Dendritic cell treated with granulocyte-macrophage colony-stimulating factor and Interleukin-4, amounts not matched to agents 40 ng/mL and 50 ng/mL, for 4 days (primary cell): ENCODE measurements at regions of chr11 and their contacts with region 1.

Region 1: GRCh38 chr11:68213555-68214174 is 569 bp upstream of the KMT5B start:
- H3K4me3 Mint-ChIP-seq: peak overlapping the region; percentile 84
- H3K27ac Mint-ChIP-seq: peak overlapping the region; percentile 75
- H3K4me1 Mint-ChIP-seq: peaks cover 53% of the 10 kb centered on the region
- H3K27me3 Mint-ChIP-seq: peaks cover 29% of the 10 kb centered on the region

Region 2: DNA sequence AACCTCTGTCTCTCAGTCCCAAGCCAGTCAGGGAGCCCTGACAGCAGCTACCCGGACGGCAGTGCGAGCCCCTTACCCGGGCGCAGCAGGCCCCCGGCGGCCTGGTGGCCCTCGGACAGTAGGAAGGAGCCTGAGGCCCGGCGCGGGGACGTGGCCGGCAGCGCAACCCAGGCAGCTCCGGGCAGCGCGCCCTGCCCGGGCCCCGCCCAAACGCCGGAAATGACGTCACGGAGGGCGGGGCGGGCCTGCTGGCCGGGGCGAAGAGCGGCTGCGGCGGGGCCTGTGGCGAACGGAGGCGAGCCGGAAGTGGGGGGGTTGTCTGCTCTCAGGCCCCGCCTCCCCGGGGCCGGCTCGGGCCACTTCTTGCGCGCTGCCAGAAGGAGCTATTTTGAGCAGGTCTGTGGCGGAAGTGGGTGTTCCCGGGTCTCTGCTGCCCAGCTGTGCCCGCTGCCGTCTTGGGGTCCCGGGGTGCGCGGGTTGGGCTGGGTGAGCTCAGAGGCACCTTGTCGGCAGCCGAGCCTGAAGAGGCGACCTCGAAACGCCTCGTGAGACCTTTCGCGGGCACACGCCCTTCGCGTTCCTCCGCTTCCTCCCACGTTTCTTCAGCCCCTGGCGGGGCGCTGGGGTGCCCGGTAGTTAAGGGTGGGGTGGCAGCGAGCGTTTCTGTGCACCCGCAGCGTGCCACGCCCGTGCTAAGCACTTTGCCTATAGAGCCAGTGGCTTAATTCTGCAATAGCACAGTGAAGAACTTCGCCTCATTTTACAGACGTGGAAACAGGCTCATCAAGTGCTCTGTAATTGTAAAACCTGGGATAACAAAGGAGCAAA is 58.3 kb after region 1 on chr11 and contains the start of gene C11orf24:
- intact Hi-C with region 1: loop called (anchors 10 kb)
- H3K4me3 Mint-ChIP-seq: peak within 1 kb of the TSS; percentile 99
- H3K27ac Mint-ChIP-seq: peak within 1 kb of the TSS; percentile 100
- H3K4me1 Mint-ChIP-seq: peaks cover 68% of the 10 kb centered on the region
- H3K27me3 Mint-ChIP-seq: no peaks in the 10 kb centered on the region

Region 3: GRCh38 chr11:68297812-68298658 is 84.4 kb after region 1 on chr11:
- intact Hi-C with region 1: loop called (anchors 5 kb)
- H3K4me3 Mint-ChIP-seq: no peak overlapping the region
- H3K27ac Mint-ChIP-seq: no peak overlapping the region
- H3K4me1 Mint-ChIP-seq: peaks cover 33% of the 10 kb centered on the region
- H3K27me3 Mint-ChIP-seq: peaks cover 20% of the 10 kb centered on the region

Region 4: DNA sequence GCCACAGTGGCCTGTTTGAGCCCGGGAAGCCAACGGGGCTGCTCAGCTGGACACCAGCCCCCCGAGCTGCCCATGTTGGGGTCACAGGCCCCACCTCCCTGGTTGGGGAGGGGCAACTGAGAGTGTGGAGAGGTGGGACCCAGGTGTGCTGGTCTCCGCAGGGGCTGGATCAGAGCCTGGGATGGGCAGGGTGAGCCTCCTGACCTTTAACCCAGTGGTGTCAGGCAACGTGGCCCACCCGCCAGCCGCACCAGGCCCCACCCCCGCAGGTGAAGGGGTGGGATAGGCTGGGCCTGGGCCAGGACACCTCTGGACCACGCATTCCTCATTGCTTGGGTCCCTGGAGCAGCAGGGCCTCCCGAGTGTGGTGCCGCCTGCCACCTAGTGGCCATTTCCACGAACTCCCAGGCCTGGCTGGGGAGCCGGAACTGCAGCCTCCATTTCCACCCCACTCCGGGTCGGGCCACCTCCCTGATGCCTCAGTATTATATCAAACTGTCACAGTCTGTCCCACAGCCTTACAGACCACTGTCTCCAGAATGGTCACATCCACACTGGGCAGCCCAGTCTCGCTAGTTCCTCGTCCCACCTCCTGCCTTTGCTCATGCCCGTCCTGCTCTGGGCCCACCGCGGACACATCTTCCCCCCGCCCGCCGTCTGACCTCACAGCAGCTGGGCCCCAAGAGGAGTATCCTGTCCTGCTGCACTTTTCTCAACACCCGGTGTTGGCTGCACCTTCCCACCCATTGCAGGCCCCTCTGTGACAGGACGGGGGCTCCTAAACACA is 233.5 kb after region 1 on chr11:
- intact Hi-C with region 1: loop called (anchors 2 kb)
- H3K4me3 Mint-ChIP-seq: no peak overlapping the region
- H3K27ac Mint-ChIP-seq: no peak overlapping the region
- H3K4me1 Mint-ChIP-seq: peaks cover 7% of the 10 kb centered on the region
- H3K27me3 Mint-ChIP-seq: no peaks in the 10 kb centered on the region